Activated CD4-positive, alpha-beta memory T cell treated with anti-CD3 and anti-CD28 coated beads for 36 hours (primary cell): ENCODE measurements at regions of chr2 and their contacts with region 1.

Region 1: GRCh38 chr2:174023591-174024523 is 58.7 kb upstream of the SP3 start:
- DNase-seq: peak; percentile 69
- H3K4me3 Mint-ChIP-seq: no peak overlapping the region
- H3K27ac Mint-ChIP-seq: peak overlapping the region; percentile 5
- H3K4me1 Mint-ChIP-seq: peaks cover 8% of the 10 kb centered on the region
- H3K27me3 Mint-ChIP-seq: peaks cover 5% of the 10 kb centered on the region

Region 2: DNA sequence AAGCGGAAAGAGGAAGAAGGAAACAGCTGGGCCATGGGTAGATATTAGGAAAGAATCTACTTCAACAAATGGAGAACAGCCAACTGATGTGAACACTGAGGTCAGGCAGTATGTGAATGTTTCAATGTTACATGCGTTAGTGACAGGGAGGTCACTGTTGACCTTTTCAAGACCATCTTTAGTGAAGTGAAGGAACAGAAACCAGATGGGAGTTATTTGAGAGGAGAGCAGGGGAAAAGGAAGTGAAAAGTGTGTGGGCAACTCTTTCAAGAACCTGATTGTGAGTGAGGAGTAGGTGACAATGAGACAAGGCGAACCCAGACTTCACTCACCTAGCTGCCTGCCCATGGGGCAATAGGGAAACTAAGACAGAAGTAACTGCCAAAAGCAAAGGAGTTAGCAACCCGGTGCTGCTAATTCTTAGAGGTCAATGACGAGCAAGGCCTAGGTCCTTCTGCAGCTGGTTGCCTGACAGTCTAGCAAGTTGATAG is 125.6 kb before region 1 on chr2:
- CTCF ChIA-PET with region 1: no interaction called
- POLR2A ChIA-PET with region 1: no interaction called
- intact Hi-C with region 1: no loop called
- DNase-seq: no peak
- H3K4me3 Mint-ChIP-seq: no peak overlapping the region
- H3K27ac Mint-ChIP-seq: peak overlapping the region; percentile 10
- H3K4me1 Mint-ChIP-seq: peaks cover 23% of the 10 kb centered on the region
- H3K27me3 Mint-ChIP-seq: no peaks in the 10 kb centered on the region

Region 3: GRCh38 chr2:173978447-173978846 is 45.4 kb before region 1 on chr2:
- CTCF ChIA-PET with region 1: no interaction called
- POLR2A ChIA-PET with region 1: interaction called, 3 read pairs
- intact Hi-C with region 1: loop called (anchors 1 kb)
- DNase-seq: peak; percentile 52
- H3K4me3 Mint-ChIP-seq: no peak overlapping the region
- H3K27ac Mint-ChIP-seq: peak overlapping the region; percentile 46
- H3K4me1 Mint-ChIP-seq: peaks cover 24% of the 10 kb centered on the region
- H3K27me3 Mint-ChIP-seq: peaks cover 10% of the 10 kb centered on the region

Region 4: DNA sequence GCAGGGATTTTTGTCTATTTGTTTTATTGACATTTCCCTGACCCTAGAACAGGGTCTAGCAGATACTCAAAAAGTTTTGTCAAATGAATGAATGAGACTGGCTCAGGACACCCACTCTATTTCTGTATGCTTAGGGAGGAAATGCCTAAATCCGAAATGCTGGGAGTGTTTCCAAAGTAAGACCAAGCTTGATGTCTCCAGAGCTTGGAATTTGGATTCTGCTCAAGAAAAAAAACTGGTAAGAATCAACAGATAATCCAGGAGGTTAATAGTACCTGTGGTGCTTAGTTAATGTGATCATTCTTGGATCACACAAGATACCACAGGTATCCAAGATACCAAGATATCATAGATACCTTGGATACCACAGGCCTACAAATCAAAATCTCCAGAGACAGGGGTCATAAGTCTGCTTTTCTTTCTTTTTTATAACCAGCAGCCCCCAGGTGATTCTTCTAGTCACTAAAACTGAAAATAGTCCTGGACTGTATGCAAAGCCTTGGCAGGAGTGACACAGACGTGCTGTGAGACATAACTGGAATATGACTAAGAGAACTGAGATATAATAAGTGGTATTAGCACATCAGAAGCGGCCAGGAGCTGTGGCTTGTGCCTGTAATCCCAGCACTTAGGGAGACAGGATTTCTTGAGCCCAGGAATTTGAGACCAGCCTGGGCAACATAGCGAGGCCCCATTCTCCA is 18.8 kb before region 1 on chr2:
- CTCF ChIA-PET with region 1: no interaction called
- POLR2A ChIA-PET with region 1: interaction called, 3 read pairs
- intact Hi-C with region 1: loop called (anchors 2 kb)
- DNase-seq: peak; percentile 48
- H3K4me3 Mint-ChIP-seq: no peak overlapping the region
- H3K27ac Mint-ChIP-seq: no peak overlapping the region
- H3K4me1 Mint-ChIP-seq: peaks cover 9% of the 10 kb centered on the region
- H3K27me3 Mint-ChIP-seq: peaks cover 6% of the 10 kb centered on the region

Region 5: DNA sequence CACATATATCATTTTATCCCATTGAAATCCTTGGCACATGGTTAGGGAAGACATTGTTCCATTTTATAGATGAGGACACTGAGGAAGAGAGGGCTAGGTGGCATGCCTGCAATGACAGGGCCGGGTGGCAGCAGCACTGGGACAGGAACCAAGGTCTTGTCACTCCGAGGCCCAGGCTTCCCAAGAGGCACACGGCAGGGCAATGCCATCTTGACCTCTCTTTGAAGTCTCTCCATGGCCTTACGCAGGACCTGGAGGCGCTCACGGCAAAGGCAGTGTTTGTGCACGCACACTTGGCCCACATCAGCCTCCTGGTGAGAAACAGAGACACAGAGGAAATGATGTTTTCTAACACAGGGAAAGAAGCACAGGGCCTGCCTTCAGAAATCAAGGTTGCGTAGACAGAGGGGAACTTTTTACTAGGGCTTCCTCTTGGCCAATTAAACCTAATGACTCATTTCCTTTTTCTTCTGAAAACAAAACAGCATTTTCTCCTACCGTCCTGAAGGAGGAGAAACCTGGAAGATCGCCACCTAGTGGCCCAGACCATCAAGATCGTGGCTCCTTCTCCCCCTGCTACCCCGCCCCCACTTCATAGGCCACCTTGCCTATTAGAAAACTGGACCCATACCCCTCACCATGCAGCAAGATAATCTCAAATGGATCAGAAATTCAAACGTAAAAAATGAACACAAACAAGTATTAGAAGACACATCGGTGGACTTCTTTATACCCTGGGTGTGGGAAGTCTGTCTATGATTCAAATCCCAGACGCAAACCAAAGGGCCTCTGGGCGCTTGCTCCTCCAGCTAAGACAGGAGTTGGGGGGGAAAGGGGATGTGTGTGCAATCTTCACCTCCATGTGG is 15.9 kb after region 1 on chr2:
- CTCF ChIA-PET with region 1: interaction called, 4 read pairs
- POLR2A ChIA-PET with region 1: no interaction called
- intact Hi-C with region 1: loop called (anchors 1 kb)
- DNase-seq: peak; percentile 90
- H3K4me3 Mint-ChIP-seq: peak overlapping the region; percentile 43
- H3K27ac Mint-ChIP-seq: peak overlapping the region; percentile 86
- H3K4me1 Mint-ChIP-seq: peaks cover 17% of the 10 kb centered on the region
- H3K27me3 Mint-ChIP-seq: peaks cover 7% of the 10 kb centered on the region

Region 6: DNA sequence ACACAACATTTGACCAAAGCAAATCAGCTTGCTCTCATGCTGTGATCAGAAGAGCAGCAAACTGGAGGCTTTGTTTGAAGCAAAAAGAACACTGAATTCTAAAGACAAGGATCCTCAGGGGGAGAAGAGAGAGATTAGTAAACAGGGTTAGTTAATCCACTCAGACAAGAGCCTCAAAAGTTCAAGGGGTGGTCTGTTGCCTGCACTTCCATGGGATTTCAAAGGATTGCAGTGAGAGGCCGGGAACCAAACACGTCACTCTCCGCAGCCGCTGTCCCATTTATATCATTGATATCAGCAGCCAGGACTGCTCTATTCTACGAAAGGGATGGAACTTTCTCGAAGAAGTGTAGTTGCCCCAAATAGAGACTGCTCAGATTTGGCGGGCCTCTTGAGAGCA is 39.1 kb after region 1 on chr2:
- CTCF ChIA-PET with region 1: no interaction called
- POLR2A ChIA-PET with region 1: no interaction called
- intact Hi-C with region 1: no loop called
- DNase-seq: no peak
- H3K4me3 Mint-ChIP-seq: no peak overlapping the region
- H3K27ac Mint-ChIP-seq: no peak overlapping the region
- H3K4me1 Mint-ChIP-seq: no peaks in the 10 kb centered on the region
- H3K27me3 Mint-ChIP-seq: peaks cover 13% of the 10 kb centered on the region